ENCODE measurements at regions of chr12 and their contacts with region 1.

Region 1: DNA sequence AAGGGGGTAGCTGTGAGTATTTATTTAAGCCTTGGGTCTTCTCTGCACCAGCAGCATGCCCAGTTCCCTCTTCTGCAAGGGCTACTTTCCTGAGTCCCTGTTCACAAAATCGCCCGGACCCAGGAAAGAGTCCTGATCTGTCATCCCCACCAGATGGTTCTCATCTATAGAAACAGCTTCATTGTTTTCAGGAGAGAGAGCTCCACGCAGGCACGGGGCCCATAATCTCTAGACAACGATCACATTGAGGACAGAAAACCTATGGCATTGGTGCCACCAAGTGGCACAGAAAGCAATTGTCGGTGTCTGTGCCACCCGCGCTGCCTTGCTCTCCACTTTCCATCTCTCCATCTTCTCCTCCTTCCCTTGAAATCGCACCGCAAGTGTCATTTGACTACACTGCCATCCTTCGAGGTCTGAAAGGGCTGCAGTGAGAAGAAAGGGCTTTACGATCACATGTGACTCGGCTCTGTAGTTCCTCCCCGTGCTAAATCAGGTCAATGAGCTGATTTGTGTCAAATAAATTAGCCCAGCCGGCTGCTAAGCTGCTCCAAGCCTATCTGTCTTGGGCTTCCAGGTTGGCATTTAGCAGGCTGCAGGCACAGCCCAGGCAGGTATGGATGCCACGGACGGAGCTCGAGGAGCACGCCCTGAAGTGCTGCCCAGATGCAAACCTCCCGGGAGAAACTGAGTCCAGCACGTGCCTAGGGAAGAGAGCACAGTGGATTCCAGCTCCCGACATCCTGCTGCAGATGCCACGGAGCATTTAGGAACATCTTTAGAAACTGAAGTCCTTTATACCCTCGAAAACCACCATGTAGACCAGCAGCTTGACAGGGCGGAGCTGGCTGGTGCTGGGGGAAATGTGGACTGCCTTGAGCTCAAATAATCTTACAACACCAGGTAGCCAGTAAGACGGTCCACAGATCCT is 28.8 kb downstream of the SPRING1 start:
- DNase-seq: peak; percentile 52
- H3K4me3 ChIP-seq: no peak overlapping the region
- H3K27ac ChIP-seq: no peak overlapping the region
- H3K4me1 ChIP-seq: no peaks in the 10 kb centered on the region
- H3K27me3 ChIP-seq: peaks cover 15% of the 10 kb centered on the region in 2 experiments
- CTCF ChIP-seq: peak; percentile 44 to 65
- POLR2A ChIP-seq: no peak

Region 2: DNA sequence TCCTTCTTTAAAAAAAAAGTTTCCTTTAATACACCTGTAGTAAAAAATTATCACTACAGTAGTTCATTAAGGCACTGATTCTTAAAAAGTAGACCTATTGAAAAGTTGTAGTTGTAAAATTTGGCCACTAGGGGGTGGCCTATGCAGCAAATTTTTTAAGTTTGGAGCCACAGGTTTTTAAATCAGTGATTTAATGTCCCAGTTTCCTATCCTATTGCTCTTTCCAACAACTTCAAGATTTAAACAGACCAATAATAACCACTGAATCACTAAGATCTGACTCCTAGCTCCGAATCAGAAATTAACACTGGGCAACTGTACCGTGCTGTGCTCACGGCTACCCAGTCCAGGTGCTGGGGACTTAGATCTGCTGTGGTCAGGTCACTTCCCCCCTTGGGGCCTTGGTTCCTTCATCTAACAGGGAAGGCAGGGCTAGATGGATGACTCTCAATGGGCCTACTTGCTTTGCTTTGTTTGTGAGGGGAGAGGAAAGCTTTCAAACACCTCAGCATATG is 710.9 kb before region 1 on chr12:
- CTCF ChIA-PET with region 1: interaction called, 6 read pairs
- POLR2A ChIA-PET with region 1: no interaction called
- dilution Hi-C with region 1: no loop called
- intact Hi-C with region 1: loop called (anchors 5 kb)
- DNase-seq: peak; percentile 70
- H3K4me3 ChIP-seq: no peak overlapping the region
- H3K27ac ChIP-seq: peak overlapping the region; percentile 34
- H3K4me1 ChIP-seq: no peaks in the 10 kb centered on the region
- H3K27me3 ChIP-seq: no peaks in the 10 kb centered on the region
- CTCF ChIP-seq: peak; percentile 47 to 52
- POLR2A ChIP-seq: no peak

Region 3: GRCh38 chr12:116142936-116143898 is 565.9 kb before region 1 on chr12:
- CTCF ChIA-PET with region 1: interaction called, 15 read pairs
- POLR2A ChIA-PET with region 1: no interaction called
- dilution Hi-C with region 1: no loop called
- intact Hi-C with region 1: loop called (anchors 5 kb)
- DNase-seq: peak; percentile 97
- H3K4me3 ChIP-seq: peak overlapping the region in 1 of 3 experiments; percentile 18
- H3K27ac ChIP-seq: peak overlapping the region; percentile 99
- H3K4me1 ChIP-seq: peaks cover 28% of the 10 kb centered on the region
- H3K27me3 ChIP-seq: no peaks in the 10 kb centered on the region
- CTCF ChIP-seq: no peak
- POLR2A ChIP-seq: peak; percentile 25

Region 4: GRCh38 chr12:116697305-116697704 is 11.8 kb before region 1 on chr12:
- CTCF ChIA-PET with region 1: interaction called, 25 read pairs
- POLR2A ChIA-PET with region 1: no interaction called
- dilution Hi-C with region 1: no loop called
- intact Hi-C with region 1: no loop called
- DNase-seq: no peak
- H3K4me3 ChIP-seq: no peak overlapping the region
- H3K27ac ChIP-seq: no peak overlapping the region
- H3K4me1 ChIP-seq: no peaks in the 10 kb centered on the region
- H3K27me3 ChIP-seq: peaks cover 23 to 26% of the 10 kb centered on the region in 2 experiments
- CTCF ChIP-seq: peak; percentile 15 to 37
- POLR2A ChIP-seq: no peak

Region 5: GRCh38 chr12:116827432-116827831 is 118.3 kb after region 1 on chr12:
- CTCF ChIA-PET with region 1: no interaction called
- POLR2A ChIA-PET with region 1: no interaction called
- dilution Hi-C with region 1: no loop called
- intact Hi-C with region 1: no loop called
- DNase-seq: no peak
- H3K4me3 ChIP-seq: no peak overlapping the region
- H3K27ac ChIP-seq: no peak overlapping the region
- H3K4me1 ChIP-seq: no peaks in the 10 kb centered on the region
- H3K27me3 ChIP-seq: no peaks in the 10 kb centered on the region
- CTCF ChIP-seq: no peak
- POLR2A ChIP-seq: no peak

Measured in endothelial cell of umbilical vein (primary cell).